Heart left ventricle (tissue), 16 donors: ENCODE measurements at regions of chr7 and their contacts with region 1.

Region 1: DNA sequence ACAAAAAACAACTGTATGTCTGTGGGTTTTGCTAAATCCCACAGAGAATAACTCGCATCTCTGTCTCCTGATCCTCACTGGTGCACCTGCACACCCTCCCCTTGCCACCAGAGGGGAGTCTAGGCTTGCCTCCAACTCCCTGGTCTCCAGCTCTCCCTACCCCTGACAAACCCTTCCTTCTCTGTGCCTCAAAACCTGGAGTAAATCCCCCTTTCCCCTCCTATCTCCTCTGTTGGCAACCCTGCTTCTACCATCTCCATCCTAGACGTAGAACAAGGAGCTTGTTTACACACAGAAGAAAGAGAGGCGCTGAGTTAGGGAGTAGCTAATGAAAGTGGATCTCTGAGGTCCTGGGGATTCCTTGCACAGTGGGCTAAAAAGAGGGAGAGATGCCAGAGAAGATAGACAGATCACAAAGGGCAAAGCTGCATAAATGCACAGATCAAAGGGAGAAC is 6.0 kb downstream of the MBLAC1 start:
- DNase-seq: peak in 2 of 5 donors; percentile 51 to 52
- ATAC-seq: peak; percentile 78 to 83 (median 80)
- H3K4me3 ChIP-seq: no peak overlapping the region
- H3K27ac ChIP-seq: no peak overlapping the region
- H3K4me1 ChIP-seq: peaks cover 0 to 16% (median 7%) of the 10 kb centered on the region in 12 donors
- H3K27me3 ChIP-seq: no peaks in the 10 kb centered on the region
- CTCF ChIP-seq: peak; percentile 55 to 83 (median 75)
- POLR2A ChIP-seq: no peak

Region 2: DNA sequence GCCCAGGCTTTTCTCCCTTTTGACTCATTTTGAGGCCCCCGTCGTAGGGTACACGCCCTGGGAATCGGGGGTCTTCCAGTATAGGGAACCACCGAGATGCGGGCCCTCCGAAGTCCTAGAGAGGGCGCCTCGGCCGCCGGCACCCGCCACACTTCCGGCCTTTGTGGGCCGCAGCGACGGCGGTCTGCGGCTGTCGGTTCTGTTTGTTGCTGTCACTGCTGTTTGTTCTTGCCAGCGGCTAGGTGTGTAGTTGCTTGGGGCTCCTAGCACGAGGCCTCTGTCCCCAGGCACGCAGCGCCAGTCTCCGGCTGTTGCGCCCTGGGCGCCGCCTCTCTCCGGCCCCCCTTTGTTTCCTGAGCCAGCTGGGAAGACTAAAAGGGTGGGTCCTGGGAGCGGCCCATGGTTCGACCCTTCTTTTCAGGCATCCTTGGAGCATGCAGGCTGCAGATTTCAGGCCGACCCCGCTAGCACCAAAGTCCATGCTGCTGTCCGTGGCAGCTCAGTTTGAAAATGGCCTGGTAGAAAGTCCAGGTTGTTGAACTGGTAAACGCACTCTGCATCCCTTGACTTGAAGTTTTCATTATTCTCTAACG is 135.1 kb before region 1 on chr7:
- intact Hi-C with region 1: loop called in 9 of 10 experiments (anchors 5 kb)
- DNase-seq: peak; percentile 42 to 86 (median 65)
- ATAC-seq: peak; percentile 53 to 79 (median 74)
- H3K4me3 ChIP-seq: peak overlapping the region; percentile 35 to 75 (median 60)
- H3K27ac ChIP-seq: peak overlapping the region; percentile 59 to 90 (median 81)
- H3K4me1 ChIP-seq: peaks cover 0 to 21% (median 11%) of the 10 kb centered on the region in 12 donors
- H3K27me3 ChIP-seq: no peaks in the 10 kb centered on the region
- CTCF ChIP-seq: peak in 11 of 12 donors; percentile 16 to 58 (median 31)
- POLR2A ChIP-seq: peak in 1 of 2 donors; percentile 37

Region 3: DNA sequence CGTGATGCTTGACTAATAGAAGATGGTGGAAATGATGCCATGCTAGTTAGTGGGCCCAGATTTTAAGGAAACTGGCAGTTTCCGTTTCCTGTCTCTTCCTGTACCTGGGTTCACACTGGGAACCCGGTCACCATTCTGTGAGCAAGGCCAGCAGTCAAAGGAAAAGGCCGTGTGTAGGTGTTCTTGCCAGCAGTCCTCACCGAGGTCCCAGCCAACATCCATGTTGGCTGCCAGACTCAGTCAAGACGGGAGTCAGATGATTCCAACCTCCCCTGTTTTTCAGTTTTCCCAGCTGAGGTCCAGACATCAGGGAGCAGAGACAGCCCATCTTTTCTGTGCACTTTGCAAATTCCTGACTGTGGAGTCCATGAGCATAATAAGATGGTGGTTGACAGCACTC is 210.0 kb after region 1 on chr7:
- intact Hi-C with region 1: loop called in 2 of 10 experiments (anchors 2 to 10 kb)
- DNase-seq: peak in 1 of 5 donors; percentile 41
- ATAC-seq: peak in 3 of 4 donors; percentile 45 to 68 (median 57)
- H3K4me3 ChIP-seq: no peak overlapping the region
- H3K27ac ChIP-seq: peak overlapping the region in 6 of 12 donors; percentile 7 to 51 (median 32)
- H3K4me1 ChIP-seq: peaks cover 0 to 23% (median 13%) of the 10 kb centered on the region in 12 donors
- H3K27me3 ChIP-seq: no peaks in the 10 kb centered on the region
- CTCF ChIP-seq: no peak
- POLR2A ChIP-seq: no peak

Region 4: GRCh38 chr7:100358027-100358865 is 225.5 kb after region 1 on chr7 and contains the start of gene PILRB:
- intact Hi-C with region 1: loop called in 1 of 10 experiments (anchors 10 kb)
- DNase-seq: no peak
- ATAC-seq: peak in 2 of 4 donors; percentile 20 to 21
- H3K4me3 ChIP-seq: no peak within 1 kb of the TSS
- H3K27ac ChIP-seq: peak within 1 kb of the TSS in 1 of 12 donors; percentile 20
- H3K4me1 ChIP-seq: no peaks in the 10 kb centered on the region
- H3K27me3 ChIP-seq: no peaks in the 10 kb centered on the region
- CTCF ChIP-seq: no peak
- POLR2A ChIP-seq: no peak
- total RNA-seq, gene PILRB: 6.2 to 15.1 (median 10.0) TPM